ENCODE measurements at regions of chr16 and their contacts with region 1.

Region 1: GRCh38 chr16:3602320-3602653 is 9.1 kb downstream of the SLX4 start:
- DNase-seq: no peak
- H3K4me3 ChIP-seq: no peak overlapping the region
- H3K27ac ChIP-seq: no peak overlapping the region
- H3K4me1 ChIP-seq: no peaks in the 10 kb centered on the region
- H3K27me3 ChIP-seq: no peaks in the 10 kb centered on the region
- CTCF ChIP-seq: no peak

Region 2: DNA sequence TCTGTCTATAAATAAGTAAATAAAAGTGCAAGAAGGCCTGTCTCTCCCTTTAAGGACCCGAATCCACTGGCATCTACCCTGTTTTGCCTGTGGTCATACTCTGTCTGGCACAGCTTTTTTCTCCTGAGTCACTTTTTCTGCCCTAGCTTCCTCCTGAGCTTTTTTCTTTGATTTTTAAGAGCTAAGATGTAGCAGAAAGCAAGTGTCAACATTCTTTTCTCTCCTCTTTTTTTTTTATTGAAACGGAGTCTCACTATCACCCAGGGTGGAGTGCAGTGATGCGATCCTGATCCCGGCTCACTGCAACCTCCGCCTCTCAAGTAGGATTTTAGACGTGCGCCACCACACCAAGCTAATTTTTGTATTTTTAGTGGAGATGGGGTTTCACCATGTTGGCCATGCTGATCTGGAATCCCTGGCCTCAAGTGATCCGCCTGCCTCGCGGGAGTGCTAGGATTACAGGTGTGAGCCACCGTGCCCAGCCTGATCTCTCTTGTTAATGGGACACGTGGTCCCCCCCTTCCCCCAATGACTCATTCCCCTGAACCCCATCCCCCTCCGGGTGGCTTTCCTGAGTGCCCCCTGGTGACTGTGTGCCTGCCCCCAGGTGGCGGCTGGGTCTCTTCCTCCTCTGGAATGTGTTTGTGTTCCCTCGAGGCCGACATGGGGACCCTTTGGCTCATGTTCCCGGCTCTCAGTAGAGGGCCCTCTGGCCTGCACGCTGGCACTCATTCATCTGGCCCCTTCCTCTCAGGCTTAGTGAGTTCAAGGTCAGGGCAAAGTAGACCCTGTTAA is 121.2 kb before region 1 on chr16:
- CTCF ChIA-PET with region 1: no interaction called
- dilution Hi-C with region 1: loop called (anchors 5 kb)
- in situ Hi-C with region 1: no loop called
- intact Hi-C with region 1: no loop called
- DNase-seq: no peak
- H3K4me3 ChIP-seq: no peak overlapping the region
- H3K27ac ChIP-seq: no peak overlapping the region
- H3K4me1 ChIP-seq: no peaks in the 10 kb centered on the region
- H3K27me3 ChIP-seq: no peaks in the 10 kb centered on the region
- CTCF ChIP-seq: no peak